Endothelial cell of umbilical vein (primary cell): ENCODE measurements at regions of chr9 and their contacts with region 1.

Region 1: DNA sequence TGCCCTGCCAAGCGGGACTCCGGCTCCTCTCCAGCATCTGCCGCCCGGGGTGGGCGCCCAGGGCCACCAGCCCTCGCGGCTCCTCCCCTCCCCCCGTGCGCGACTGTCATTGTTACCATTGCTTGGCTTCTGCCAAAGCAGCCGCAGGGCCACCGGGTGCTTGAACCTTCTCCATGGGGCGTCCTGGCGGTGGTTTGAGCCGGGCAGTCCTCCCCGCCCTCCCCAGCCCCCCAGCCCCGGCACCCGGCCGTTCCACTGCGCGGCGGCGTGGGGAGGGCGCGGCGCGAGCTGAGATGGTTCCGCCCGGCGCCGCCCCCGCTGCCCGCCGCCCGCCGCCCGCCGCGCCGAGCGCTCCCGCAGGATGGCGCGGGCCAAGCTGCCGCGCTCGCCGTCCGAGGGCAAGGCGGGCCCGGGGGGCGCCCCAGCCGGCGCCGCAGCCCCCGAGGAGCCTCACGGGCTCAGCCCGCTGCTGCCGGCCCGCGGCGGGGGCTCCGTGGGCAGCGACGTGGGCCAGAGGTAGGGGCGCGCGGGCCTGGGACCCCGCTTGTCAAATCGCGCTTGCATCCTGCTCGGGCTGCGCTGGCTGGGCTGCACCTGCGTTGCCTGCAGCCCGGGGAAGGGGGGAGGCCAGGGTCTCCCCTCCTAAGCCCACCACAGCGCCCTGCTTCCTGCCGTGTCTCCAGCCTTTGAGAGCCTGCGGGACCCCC is 34.4 kb downstream of the KCNT1 start:
- DNase-seq: no peak
- H3K4me3 ChIP-seq: no peak overlapping the region
- H3K27ac ChIP-seq: no peak overlapping the region
- H3K4me1 ChIP-seq: no peaks in the 10 kb centered on the region
- H3K27me3 ChIP-seq: peaks cover 2 to 7% of the 10 kb centered on the region in 2 experiments
- CTCF ChIP-seq: no peak
- POLR2A ChIP-seq: no peak

Region 2: GRCh38 chr9:135701959-135702721 is 34.3 kb before region 1 on chr9 and contains the start of gene KCNT1:
- CTCF ChIA-PET with region 1: no interaction called
- POLR2A ChIA-PET with region 1: no interaction called
- dilution Hi-C with region 1: no loop called
- intact Hi-C with region 1: loop called (anchors 5 kb)
- DNase-seq: peak; percentile 40
- H3K4me3 ChIP-seq: no peak within 1 kb of the TSS
- H3K27ac ChIP-seq: no peak within 1 kb of the TSS
- H3K4me1 ChIP-seq: peaks cover 2% of the 10 kb centered on the region
- H3K27me3 ChIP-seq: peaks cover 0 to 2% of the 10 kb centered on the region in 2 experiments
- CTCF ChIP-seq: peak; percentile 73 to 90
- POLR2A ChIP-seq: no peak
- total RNA-seq, gene KCNT1: not detected in 2 replicates